Activated CD4-positive, alpha-beta T cell treated with anti-CD3 and anti-CD28 coated beads, Interleukin-2, amount 10 ng/mL, durations not matched to agents 7 days and 5 days (primary cell): ENCODE measurements at regions of chr22 and their contacts with region 1.

Region 1: GRCh38 chr22:36239401-36240171 is at the start of gene APOL2:
- DNase-seq: peak; percentile 91
- H3K4me3 Mint-ChIP-seq: peak within 1 kb of the TSS; percentile 90
- H3K27ac Mint-ChIP-seq: peak within 1 kb of the TSS; percentile 93
- H3K4me1 Mint-ChIP-seq: peaks cover 44% of the 10 kb centered on the region
- H3K27me3 Mint-ChIP-seq: peaks cover 3% of the 10 kb centered on the region
- total RNA-seq, gene APOL2: 77.0 to 85.4 TPM

Region 2: GRCh38 chr22:36227386-36227785 is 12.2 kb before region 1 on chr22:
- CTCF ChIA-PET with region 1: interaction called, 14 read pairs
- POLR2A ChIA-PET with region 1: interaction called, 5 read pairs
- DNase-seq: peak; percentile 16
- H3K4me3 Mint-ChIP-seq: no peak overlapping the region
- H3K27ac Mint-ChIP-seq: no peak overlapping the region
- H3K4me1 Mint-ChIP-seq: peaks cover 11% of the 10 kb centered on the region
- H3K27me3 Mint-ChIP-seq: no peaks in the 10 kb centered on the region

Region 3: DNA sequence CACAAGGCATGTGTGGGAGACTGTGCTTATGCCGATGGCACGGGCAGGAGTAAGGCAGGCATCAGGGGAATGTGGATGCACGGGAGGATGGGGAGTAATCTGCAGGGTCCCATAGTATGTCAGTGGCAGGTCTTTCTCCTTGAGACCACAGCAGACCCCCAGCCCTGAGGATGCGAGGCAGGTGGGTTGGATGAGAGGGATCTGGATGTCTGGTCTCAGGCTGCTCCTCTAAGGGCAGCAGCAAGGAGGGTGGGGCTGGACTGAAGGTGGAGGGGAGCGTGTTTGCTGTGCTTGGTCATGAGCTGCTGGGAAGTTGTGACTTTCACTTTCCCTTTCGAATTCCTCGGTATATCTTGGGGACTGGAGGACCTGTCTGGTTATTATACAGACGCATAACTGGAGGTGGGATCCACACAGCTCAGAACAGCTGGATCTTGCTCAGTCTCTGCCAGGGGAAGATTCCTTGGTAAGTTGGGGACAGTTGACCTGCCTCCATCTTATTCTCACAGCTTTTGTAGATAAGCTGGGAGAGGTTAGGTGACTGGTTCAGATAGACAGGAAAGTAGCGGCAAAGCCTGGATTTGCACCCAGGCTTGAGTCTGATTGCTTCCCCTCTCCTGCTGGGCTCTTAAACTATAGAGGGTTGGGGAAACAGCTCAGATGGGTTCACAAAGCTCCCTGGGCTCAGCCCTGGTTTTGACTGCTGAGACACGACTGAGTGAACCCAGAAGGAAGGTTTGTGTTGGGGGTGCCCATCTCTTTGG is 13.3 kb after region 1 on chr22 and contains the start of gene APOL1:
- CTCF ChIA-PET with region 1: interaction called, 53 read pairs
- POLR2A ChIA-PET with region 1: interaction called, 7 read pairs
- DNase-seq: peak; percentile 75
- H3K4me3 Mint-ChIP-seq: peak within 1 kb of the TSS; percentile 90
- H3K27ac Mint-ChIP-seq: peak within 1 kb of the TSS; percentile 93
- H3K4me1 Mint-ChIP-seq: peaks cover 52% of the 10 kb centered on the region
- H3K27me3 Mint-ChIP-seq: no peaks in the 10 kb centered on the region
- total RNA-seq, gene APOL1: 50.9 to 60.0 TPM

Region 4: GRCh38 chr22:36267896-36268485 is 28.4 kb after region 1 on chr22:
- CTCF ChIA-PET with region 1: interaction called, 10 read pairs
- POLR2A ChIA-PET with region 1: no interaction called
- DNase-seq: no peak
- H3K4me3 Mint-ChIP-seq: no peak overlapping the region
- H3K27ac Mint-ChIP-seq: no peak overlapping the region
- H3K4me1 Mint-ChIP-seq: peaks cover 2% of the 10 kb centered on the region
- H3K27me3 Mint-ChIP-seq: no peaks in the 10 kb centered on the region